Stomach (tissue), 19 donors: ENCODE measurements at regions of chr3 and their contacts with region 1.

Region 1: DNA sequence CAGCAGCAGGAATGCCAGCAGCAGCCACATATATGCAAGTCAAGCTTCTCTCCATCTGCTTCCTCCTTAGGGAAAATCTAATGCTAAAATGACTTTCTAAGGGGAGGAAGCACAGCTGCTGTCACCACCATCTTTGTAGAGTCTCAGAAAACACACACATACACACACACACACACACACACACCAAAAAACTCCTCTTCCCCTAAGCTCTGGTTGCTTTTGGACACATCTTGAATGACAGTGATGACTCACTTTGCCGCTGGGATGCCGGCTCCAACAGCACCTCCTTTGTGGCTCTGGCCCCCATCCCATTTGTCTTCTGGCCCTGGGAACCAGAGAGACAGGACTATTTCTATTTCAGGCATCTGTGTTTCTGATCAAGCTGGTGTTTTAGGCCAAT is 124.8 kb upstream of the GOLIM4 start:
- DNase-seq: no peak
- H3K4me3 ChIP-seq: no peak overlapping the region
- H3K27ac ChIP-seq: no peak overlapping the region
- H3K4me1 ChIP-seq: no peaks in the 10 kb centered on the region
- H3K27me3 ChIP-seq: no peaks in the 10 kb centered on the region
- CTCF ChIP-seq: no peak
- EP300 ChIP-seq: no peak
- POLR2A ChIP-seq: no peak

Region 2: GRCh38 chr3:168467115-168467714 is 246.7 kb after region 1 on chr3:
- intact Hi-C with region 1: loop called (anchors 10 kb)
- DNase-seq: peak in 1 of 2 donors; percentile 73
- H3K4me3 ChIP-seq: no peak overlapping the region
- H3K27ac ChIP-seq: no peak overlapping the region
- H3K4me1 ChIP-seq: peaks cover 0 to 4% (median 0%) of the 10 kb centered on the region in 4 donors
- H3K27me3 ChIP-seq: no peaks in the 10 kb centered on the region
- CTCF ChIP-seq: peak in 4 of 7 experiments; percentile 9 to 20 (median 15)
- EP300 ChIP-seq: no peak
- POLR2A ChIP-seq: no peak

Region 3: GRCh38 chr3:168834558-168834957 is 614.0 kb after region 1 on chr3:
- intact Hi-C with region 1: loop called (anchors 5 kb)
- DNase-seq: no peak
- H3K4me3 ChIP-seq: no peak overlapping the region
- H3K27ac ChIP-seq: no peak overlapping the region
- H3K4me1 ChIP-seq: no peaks in the 10 kb centered on the region
- H3K27me3 ChIP-seq: no peaks in the 10 kb centered on the region
- CTCF ChIP-seq: no peak
- EP300 ChIP-seq: no peak
- POLR2A ChIP-seq: no peak